Heart right ventricle (tissue), 16 donors: ENCODE measurements at regions of chr14 and their contacts with region 1.

Region 1: DNA sequence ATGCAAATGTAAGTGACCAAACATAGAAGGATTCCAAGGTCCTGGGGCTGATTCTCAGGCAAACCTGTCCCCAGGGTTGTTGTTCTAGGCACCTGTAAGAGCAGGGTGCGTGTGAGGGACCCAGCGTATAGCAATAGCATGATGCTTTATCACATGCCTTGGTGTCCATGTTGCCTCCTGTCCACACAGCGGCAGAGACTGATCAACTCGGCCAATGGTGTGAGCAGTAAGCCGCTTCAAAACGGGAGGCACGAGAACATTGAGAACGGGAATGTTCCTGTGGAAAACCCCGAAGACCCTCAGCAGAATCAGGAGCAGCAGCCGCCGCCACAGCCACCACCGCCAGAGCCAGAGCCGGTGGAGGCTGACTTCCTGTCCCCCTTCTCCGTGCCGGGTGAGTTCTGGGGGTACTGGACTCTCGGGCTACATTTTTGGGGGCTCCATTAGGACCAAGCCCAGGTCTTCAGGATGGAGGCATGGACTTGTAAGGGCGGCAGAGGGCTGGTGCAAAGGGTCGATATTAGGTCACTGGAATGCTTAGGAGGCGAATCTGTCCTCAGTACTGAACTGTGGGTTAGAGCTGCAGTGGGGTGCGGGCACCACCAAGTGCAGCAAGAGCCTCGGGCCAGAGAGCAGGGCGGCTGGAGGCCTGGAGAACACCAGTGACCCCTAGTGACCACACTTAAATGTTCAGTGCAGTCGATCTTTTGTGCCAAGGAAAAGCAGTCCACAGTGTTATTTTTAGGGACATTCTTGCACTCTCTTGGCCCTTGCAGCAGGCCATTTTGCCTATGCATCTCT is 57.2 kb upstream of the RIN3 start:
- DNase-seq: peak; percentile 59 to 70
- ATAC-seq: peak; percentile 40 to 78 (median 60)
- H3K4me3 ChIP-seq: no peak overlapping the region
- H3K27ac ChIP-seq: peak overlapping the region in 3 of 10 donors; percentile 4 to 25 (median 22)
- H3K4me1 ChIP-seq: peaks cover 10 to 51% (median 31%) of the 10 kb centered on the region in 9 donors
- H3K27me3 ChIP-seq: no peaks in the 10 kb centered on the region
- CTCF ChIP-seq: peak; percentile 67 to 85 (median 82)

Region 2: DNA sequence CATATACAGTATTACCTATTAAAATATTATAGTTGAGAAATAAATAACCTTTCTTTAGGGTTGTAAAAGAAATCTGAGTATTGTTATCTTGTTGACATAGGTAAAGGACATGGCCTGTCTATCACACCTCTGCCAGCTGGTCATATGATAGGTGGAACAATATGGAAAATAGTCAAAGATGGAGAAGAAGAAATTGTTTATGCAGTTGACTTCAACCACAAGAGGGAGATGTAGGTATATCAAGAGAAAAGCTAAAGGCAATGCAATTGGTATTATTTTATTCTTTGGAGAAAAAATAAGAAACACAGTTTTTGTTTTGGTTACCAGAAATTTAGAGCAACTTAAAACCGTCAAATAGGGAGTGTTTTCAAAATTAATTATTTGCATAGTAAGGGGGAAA is 321.1 kb before region 1 on chr14:
- intact Hi-C with region 1: loop called in 7 of 10 experiments (anchors 5 to 10 kb)
- DNase-seq: no peak
- ATAC-seq: no peak
- H3K4me3 ChIP-seq: no peak overlapping the region
- H3K27ac ChIP-seq: no peak overlapping the region
- H3K4me1 ChIP-seq: peaks cover 0 to 4% (median 0%) of the 10 kb centered on the region in 9 donors
- H3K27me3 ChIP-seq: no peaks in the 10 kb centered on the region
- CTCF ChIP-seq: peak in 8 of 9 donors; percentile 33 to 71 (median 52)

Region 3: GRCh38 chr14:92513204-92513973 is 57.0 kb after region 1 on chr14 and contains the start of gene RIN3:
- intact Hi-C with region 1: loop called in 4 of 10 experiments (anchors 2 to 5 kb)
- DNase-seq: peak; percentile 66 to 67
- ATAC-seq: peak; percentile 62 to 85 (median 75)
- H3K4me3 ChIP-seq: peak within 1 kb of the TSS; percentile 54 to 97 (median 80)
- H3K27ac ChIP-seq: peak within 1 kb of the TSS; percentile 64 to 98 (median 93)
- H3K4me1 ChIP-seq: peaks cover 0 to 66% (median 39%) of the 10 kb centered on the region in 9 donors
- H3K27me3 ChIP-seq: peaks cover 0 to 4% (median 0%) of the 10 kb centered on the region in 7 donors
- CTCF ChIP-seq: no peak
- total RNA-seq, gene RIN3: 9.4 to 24.0 (median 12.7) TPM

Region 4: DNA sequence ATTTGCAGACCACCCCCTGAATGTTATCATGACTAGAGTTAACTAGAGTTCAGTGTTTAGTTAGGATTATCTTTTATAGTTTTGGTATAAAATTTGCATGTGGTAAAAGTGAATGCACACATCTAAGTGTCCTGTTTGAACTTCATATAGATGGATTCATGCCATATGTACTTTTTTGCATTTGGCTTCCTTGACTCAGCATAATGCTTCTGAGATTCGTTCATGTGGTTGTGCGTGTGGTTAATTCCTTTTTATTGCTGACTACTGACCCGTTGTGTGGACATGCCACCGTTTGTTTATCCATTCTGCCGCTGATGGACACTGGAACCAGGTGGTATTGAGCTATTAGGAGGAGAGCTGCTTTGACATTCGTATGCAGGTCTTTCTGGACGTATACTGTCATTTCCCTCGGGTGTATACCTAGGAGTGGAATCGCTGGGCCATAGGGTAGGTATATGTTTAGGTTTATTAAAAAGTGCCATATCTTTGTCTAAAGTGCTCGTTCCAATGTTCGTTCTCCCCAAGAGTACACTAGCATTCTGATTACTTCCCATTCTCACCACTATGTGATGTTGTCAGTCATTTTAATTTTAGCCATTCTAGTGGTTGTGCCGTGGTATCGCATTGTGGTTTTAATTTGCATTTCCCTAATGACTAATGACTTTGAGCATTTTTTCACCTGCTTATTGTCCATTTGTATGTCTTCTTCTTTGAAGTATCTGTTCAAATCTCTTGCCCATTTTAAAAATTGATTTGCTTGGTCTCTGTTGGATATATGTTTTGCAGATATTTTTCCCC is 94.8 kb after region 1 on chr14:
- intact Hi-C with region 1: loop called in 2 of 10 experiments (anchors 10 kb)
- DNase-seq: no peak
- ATAC-seq: no peak
- H3K4me3 ChIP-seq: no peak overlapping the region
- H3K27ac ChIP-seq: peak overlapping the region in 1 of 10 donors; percentile 89
- H3K4me1 ChIP-seq: peaks cover 5 to 71% (median 30%) of the 10 kb centered on the region in 9 donors
- H3K27me3 ChIP-seq: no peaks in the 10 kb centered on the region
- CTCF ChIP-seq: no peak

Region 5: GRCh38 chr14:92686900-92687444 is 230.6 kb after region 1 on chr14:
- intact Hi-C with region 1: loop called in 4 of 10 experiments (anchors 5 to 10 kb)
- DNase-seq: peak; percentile 66 to 81
- ATAC-seq: peak; percentile 79 to 90 (median 86)
- H3K4me3 ChIP-seq: peak overlapping the region in 9 of 10 donors; percentile 32 to 56 (median 47)
- H3K27ac ChIP-seq: no peak overlapping the region
- H3K4me1 ChIP-seq: peaks cover under 1 to 19% (median 7%) of the 10 kb centered on the region in 9 donors
- H3K27me3 ChIP-seq: no peaks in the 10 kb centered on the region
- CTCF ChIP-seq: peak; percentile 68 to 100 (median 98)